Aorta (tissue), 5 donors: ENCODE measurements at regions of chr7 and their contacts with region 1.

Region 1: DNA sequence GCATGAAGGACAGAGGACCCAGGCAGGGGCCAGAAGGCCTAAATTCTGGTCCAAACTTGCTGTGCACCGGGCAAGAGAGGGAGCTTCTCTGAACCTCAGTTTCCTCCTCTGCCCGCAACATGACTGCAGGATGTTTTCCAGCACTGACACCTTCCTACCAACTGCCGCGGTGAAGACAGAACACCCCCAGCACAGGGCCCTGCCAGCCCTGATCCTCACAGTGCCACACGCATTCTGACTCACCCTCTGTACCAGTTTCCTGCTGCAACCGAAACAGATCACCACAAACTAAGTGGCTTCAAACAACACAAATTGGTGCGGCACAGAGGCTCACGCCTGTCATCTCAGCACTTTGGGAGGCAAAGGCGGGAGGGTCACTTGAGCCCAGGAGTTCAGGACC is 18.1 kb downstream of the MAD1L1 start:
- DNase-seq: peak in 1 of 2 donors; percentile 29
- ATAC-seq: no peak
- H3K4me3 ChIP-seq: no peak overlapping the region
- H3K27ac ChIP-seq: no peak overlapping the region
- H3K4me1 ChIP-seq: no peaks in the 10 kb centered on the region
- H3K27me3 ChIP-seq: no peaks in the 10 kb centered on the region

Region 2: DNA sequence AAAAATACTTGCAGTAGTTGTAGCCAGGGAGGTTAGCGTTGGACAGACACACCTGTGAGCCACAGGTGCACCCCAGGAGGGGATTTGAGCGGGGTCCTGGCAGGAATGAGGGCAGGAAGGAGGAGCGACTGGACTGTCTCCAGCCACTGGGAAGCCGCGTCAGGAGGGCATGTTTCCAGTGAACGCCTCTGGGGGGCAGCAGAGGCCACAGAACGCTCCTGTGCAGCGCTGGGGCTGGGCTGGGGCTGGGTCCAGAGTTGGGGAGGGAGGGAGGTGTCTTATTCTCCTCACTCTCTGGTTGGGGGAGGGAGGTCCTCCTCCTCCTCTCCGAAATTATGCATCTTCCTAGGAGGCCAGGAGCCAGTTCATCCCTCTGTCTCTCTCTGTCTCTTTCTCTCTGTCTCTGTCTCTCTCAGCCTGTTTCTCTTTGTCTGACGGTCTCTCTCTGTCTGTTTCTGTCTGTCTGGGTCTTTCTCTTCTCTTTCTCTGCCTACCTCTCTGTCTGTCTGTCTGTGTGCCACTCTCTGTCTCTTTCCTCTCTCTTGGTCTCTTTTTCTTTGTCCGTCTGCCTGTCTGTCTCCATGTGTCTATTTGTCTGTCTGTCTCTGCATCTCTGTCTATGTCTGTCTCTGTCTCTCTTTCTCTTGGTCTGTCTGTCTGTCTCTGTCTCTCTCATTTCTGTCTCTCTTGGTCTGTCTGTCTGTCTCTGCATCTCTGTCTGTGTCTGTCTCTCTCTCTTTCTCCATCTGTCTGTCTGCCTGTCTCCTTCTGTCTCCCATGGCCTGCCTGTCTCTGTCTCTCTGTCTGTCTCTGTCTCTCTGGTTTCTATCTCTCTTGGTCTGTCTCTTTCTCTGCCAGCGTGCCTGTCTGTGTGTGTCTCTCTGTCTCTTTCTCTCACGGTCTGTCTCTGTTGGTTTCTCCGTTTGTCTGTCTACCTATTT is 634.9 kb before region 1 on chr7:
- intact Hi-C with region 1: loop called (anchors 5 kb)
- DNase-seq: peak; percentile 77 to 92
- ATAC-seq: peak; percentile 89
- H3K4me3 ChIP-seq: no peak overlapping the region
- H3K27ac ChIP-seq: no peak overlapping the region
- H3K4me1 ChIP-seq: no peaks in the 10 kb centered on the region
- H3K27me3 ChIP-seq: no peaks in the 10 kb centered on the region

Region 3: DNA sequence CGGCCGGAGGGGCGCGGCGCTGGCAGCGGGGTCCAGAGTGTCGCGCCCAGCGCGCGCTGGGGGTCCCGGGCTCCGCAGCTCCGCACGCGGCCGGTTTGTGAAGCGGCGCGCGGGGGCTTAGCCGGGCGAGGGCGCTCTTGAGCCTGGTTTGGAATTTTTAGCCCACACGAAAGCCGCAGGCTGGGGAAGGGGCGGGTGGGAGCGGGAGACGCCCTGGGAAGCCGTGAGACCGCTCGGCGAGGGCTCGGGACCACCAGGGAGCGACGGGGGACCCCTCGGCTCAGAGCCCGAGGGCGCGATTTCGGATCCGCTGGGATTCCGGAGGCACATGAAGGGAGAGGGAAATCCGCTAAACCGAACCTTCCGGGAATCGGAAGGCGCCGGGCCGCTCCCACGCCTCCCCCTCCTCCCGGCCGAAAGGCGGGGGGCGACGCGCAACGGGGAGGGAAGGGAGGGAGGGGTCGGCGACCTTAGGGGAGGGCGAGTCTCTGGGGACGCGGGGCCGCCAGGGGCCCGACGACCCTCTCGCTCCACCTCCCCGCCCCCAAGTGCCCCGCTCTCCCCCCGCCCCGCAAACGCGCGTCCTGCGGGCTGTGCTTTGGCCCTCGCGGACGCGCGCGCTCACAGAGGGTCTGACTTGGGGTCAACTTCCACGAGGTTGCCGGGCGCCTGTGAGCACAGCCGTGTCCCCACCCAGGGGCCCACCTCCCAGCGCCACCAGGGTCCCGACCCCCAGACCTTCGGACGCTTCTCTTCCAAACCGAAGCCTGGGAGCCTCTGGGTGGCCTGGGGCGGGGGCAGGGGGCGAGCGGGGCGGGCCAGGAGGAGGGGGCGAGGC is 549.7 kb before region 1 on chr7:
- intact Hi-C with region 1: loop called (anchors 5 to 10 kb)
- DNase-seq: peak; percentile 69 to 91
- ATAC-seq: no peak
- H3K4me3 ChIP-seq: peak overlapping the region; percentile 43 to 58
- H3K27ac ChIP-seq: no peak overlapping the region
- H3K4me1 ChIP-seq: no peaks in the 10 kb centered on the region
- H3K27me3 ChIP-seq: no peaks in the 10 kb centered on the region

Region 4: GRCh38 chr7:1961701-1962276 is 252.8 kb before region 1 on chr7:
- intact Hi-C with region 1: no loop called
- DNase-seq: no peak
- ATAC-seq: no peak
- H3K4me3 ChIP-seq: no peak overlapping the region
- H3K27ac ChIP-seq: no peak overlapping the region
- H3K4me1 ChIP-seq: no peaks in the 10 kb centered on the region
- H3K27me3 ChIP-seq: no peaks in the 10 kb centered on the region